H1 (cell line): ENCODE measurements at regions of chr5 and their contacts with region 1.

Region 1: GRCh38 chr5:64612344-64612961 is 77.8 kb upstream of the SHISAL2B start:
- DNase-seq: no peak
- H3K4me3 ChIP-seq: no peak overlapping the region
- H3K27ac ChIP-seq: no peak overlapping the region
- H3K4me1 ChIP-seq: no peaks in the 10 kb centered on the region
- H3K27me3 ChIP-seq: no peaks in the 10 kb centered on the region
- CTCF ChIP-seq: peak in 2 of 3 experiments; percentile 82; a peak in 3 of 4 replicates
- EP300 ChIP-seq: no peak
- POLR2A ChIP-seq: no peak
- RAD21 ChIP-seq: peak; percentile 96

Region 2: GRCh38 chr5:64147849-64148441 is 464.5 kb before region 1 on chr5:
- CTCF ChIA-PET with region 1: interaction called, 30 read pairs
- POLR2A ChIA-PET with region 1: no interaction called
- DNase-seq: peak in 1 of 2 experiments; percentile 74
- H3K4me3 ChIP-seq: no peak overlapping the region
- H3K27ac ChIP-seq: no peak overlapping the region
- H3K4me1 ChIP-seq: no peaks in the 10 kb centered on the region; a peak in 1 of 7 replicates
- H3K27me3 ChIP-seq: no peaks in the 10 kb centered on the region
- CTCF ChIP-seq: peak; percentile 64 to 91 (median 80)
- EP300 ChIP-seq: no peak
- POLR2A ChIP-seq: no peak
- RAD21 ChIP-seq: peak; percentile 95 to 98

Region 3: DNA sequence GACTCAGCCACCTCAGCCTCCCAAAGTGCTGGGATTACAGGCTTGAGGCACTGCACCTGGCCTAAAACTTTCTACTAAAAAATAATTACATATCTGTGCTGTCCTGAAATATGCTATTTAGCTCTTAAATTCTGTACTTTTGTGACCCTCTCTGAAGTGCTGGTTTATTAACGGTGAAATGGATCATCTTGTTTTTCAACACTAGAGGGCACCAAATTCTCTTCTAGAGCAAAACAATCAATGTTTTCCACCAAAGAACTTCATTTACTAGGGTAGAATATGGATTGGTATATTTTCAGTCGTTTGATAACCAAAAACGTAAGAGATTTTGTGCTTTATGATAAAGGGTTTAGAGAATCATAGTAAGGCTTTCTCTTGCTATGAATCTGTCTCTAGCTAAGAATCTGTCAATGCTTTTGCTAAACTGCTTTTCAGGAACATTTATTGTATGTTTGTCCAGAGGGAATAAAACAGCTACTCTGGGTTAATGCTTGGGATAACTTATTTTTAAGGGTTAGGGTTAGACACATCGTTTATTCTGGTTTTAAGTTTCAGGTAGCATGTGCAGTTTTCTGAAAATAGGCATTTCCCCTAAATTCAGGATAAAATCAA is 383.2 kb before region 1 on chr5:
- CTCF ChIA-PET with region 1: interaction called, 81 read pairs
- POLR2A ChIA-PET with region 1: no interaction called
- DNase-seq: no peak
- H3K4me3 ChIP-seq: no peak overlapping the region
- H3K27ac ChIP-seq: no peak overlapping the region
- H3K4me1 ChIP-seq: no peaks in the 10 kb centered on the region
- H3K27me3 ChIP-seq: no peaks in the 10 kb centered on the region
- CTCF ChIP-seq: peak in 2 of 3 experiments; percentile 33 to 54; a peak in 2 of 4 replicates
- EP300 ChIP-seq: no peak
- POLR2A ChIP-seq: no peak
- RAD21 ChIP-seq: peak; percentile 68 to 80

Region 4: GRCh38 chr5:64364426-64364825 is 248.0 kb before region 1 on chr5:
- CTCF ChIA-PET with region 1: no interaction called
- POLR2A ChIA-PET with region 1: no interaction called
- DNase-seq: no peak
- H3K4me3 ChIP-seq: no peak overlapping the region
- H3K27ac ChIP-seq: no peak overlapping the region
- H3K4me1 ChIP-seq: no peaks in the 10 kb centered on the region
- H3K27me3 ChIP-seq: no peaks in the 10 kb centered on the region
- CTCF ChIP-seq: no peak
- EP300 ChIP-seq: no peak
- POLR2A ChIP-seq: no peak
- RAD21 ChIP-seq: no peak

Region 5: GRCh38 chr5:64576250-64576649 is 36.2 kb before region 1 on chr5:
- CTCF ChIA-PET with region 1: no interaction called
- POLR2A ChIA-PET with region 1: no interaction called
- DNase-seq: no peak
- H3K4me3 ChIP-seq: no peak overlapping the region
- H3K27ac ChIP-seq: no peak overlapping the region
- H3K4me1 ChIP-seq: no peaks in the 10 kb centered on the region
- H3K27me3 ChIP-seq: no peaks in the 10 kb centered on the region
- CTCF ChIP-seq: no peak
- EP300 ChIP-seq: no peak
- POLR2A ChIP-seq: no peak
- RAD21 ChIP-seq: no peak

Region 6: GRCh38 chr5:64595031-64595855 is 17.2 kb before region 1 on chr5:
- CTCF ChIA-PET with region 1: interaction called, 105 read pairs
- POLR2A ChIA-PET with region 1: no interaction called
- DNase-seq: no peak
- H3K4me3 ChIP-seq: no peak overlapping the region
- H3K27ac ChIP-seq: no peak overlapping the region
- H3K4me1 ChIP-seq: peaks cover 0 to 12% (median 2%) of the 10 kb centered on the region in 4 experiments; a peak in 4 of 7 replicates
- H3K27me3 ChIP-seq: no peaks in the 10 kb centered on the region
- CTCF ChIP-seq: peak; percentile 42 to 98 (median 61)
- EP300 ChIP-seq: no peak
- POLR2A ChIP-seq: no peak
- RAD21 ChIP-seq: peak; percentile 77 to 82

Region 7: GRCh38 chr5:64622991-64623390 is 10.5 kb after region 1 on chr5:
- CTCF ChIA-PET with region 1: interaction called, 21 read pairs
- POLR2A ChIA-PET with region 1: no interaction called
- DNase-seq: no peak
- H3K4me3 ChIP-seq: no peak overlapping the region
- H3K27ac ChIP-seq: no peak overlapping the region
- H3K4me1 ChIP-seq: no peaks in the 10 kb centered on the region
- H3K27me3 ChIP-seq: no peaks in the 10 kb centered on the region; a peak in 1 of 7 replicates
- CTCF ChIP-seq: no peak
- EP300 ChIP-seq: no peak
- POLR2A ChIP-seq: no peak
- RAD21 ChIP-seq: no peak

Region 8: DNA sequence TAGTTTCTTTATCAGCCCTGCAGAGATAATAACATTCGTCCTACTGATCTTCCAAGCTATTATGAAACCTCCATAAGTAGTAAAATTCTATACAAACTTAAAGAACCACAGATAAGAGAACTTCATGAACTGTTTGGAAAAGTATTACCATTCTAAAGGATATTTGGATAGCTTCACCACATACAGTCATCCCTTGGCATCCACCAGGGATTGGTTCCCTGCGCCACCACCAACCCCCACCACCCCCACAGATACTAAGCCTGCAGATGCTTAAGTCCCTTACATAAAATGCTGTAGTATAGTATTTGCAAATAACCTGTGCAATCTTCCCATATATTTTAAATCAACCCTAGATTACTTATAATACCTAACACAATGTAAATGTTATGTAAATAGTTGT is 16.4 kb after region 1 on chr5:
- CTCF ChIA-PET with region 1: interaction called, 21 read pairs
- POLR2A ChIA-PET with region 1: no interaction called
- DNase-seq: no peak
- H3K4me3 ChIP-seq: no peak overlapping the region
- H3K27ac ChIP-seq: no peak overlapping the region
- H3K4me1 ChIP-seq: no peaks in the 10 kb centered on the region
- H3K27me3 ChIP-seq: no peaks in the 10 kb centered on the region
- CTCF ChIP-seq: no peak
- EP300 ChIP-seq: no peak
- POLR2A ChIP-seq: no peak
- RAD21 ChIP-seq: no peak

Region 9: DNA sequence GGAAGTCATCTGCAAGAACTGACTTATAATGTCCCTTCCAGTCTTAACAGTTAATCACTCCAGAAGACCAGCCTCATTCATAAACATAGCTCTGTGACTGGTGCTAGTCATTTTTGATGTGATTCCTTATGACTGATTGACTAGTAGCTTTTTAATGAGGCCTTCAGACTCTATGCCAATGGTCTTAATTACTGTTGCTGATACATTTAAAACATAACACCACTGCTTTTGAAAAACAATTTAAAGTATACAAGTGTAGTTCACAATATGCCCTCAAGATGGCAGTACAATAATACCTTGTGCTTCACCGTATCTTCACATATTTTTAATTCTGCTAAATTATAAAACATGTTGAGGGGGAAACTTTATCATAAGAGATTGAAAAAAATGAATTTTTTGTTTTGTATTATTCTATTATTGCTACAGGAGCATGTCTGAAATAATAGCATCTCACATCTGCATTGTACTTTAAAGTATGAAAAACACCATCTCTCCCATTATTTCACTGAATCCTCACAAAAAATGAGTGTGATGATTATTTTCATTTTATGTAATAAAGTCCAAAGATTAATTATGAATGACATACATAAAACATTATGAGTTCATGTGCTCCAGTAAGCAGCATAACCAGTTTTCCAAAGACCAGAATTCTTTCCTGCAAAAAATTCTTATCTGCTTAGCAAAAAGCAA is 22.7 kb after region 1 on chr5:
- CTCF ChIA-PET with region 1: interaction called, 21 read pairs
- POLR2A ChIA-PET with region 1: no interaction called
- DNase-seq: no peak
- H3K4me3 ChIP-seq: no peak overlapping the region
- H3K27ac ChIP-seq: no peak overlapping the region
- H3K4me1 ChIP-seq: peaks cover 0 to 3% (median 1%) of the 10 kb centered on the region in 4 experiments; a peak in 3 of 7 replicates
- H3K27me3 ChIP-seq: no peaks in the 10 kb centered on the region
- CTCF ChIP-seq: peak in 2 of 3 experiments; percentile 41 to 49; a peak in 2 of 4 replicates
- EP300 ChIP-seq: no peak
- POLR2A ChIP-seq: no peak
- RAD21 ChIP-seq: peak; percentile 66 to 86

Region 10: GRCh38 chr5:64671678-64672077 is 59.2 kb after region 1 on chr5:
- CTCF ChIA-PET with region 1: no interaction called
- POLR2A ChIA-PET with region 1: no interaction called
- DNase-seq: no peak
- H3K4me3 ChIP-seq: no peak overlapping the region
- H3K27ac ChIP-seq: no peak overlapping the region
- H3K4me1 ChIP-seq: no peaks in the 10 kb centered on the region
- H3K27me3 ChIP-seq: no peaks in the 10 kb centered on the region
- CTCF ChIP-seq: no peak
- EP300 ChIP-seq: no peak
- POLR2A ChIP-seq: no peak
- RAD21 ChIP-seq: no peak